ENCODE measurements at regions of chr15 and their contacts with region 1.

Region 1: DNA sequence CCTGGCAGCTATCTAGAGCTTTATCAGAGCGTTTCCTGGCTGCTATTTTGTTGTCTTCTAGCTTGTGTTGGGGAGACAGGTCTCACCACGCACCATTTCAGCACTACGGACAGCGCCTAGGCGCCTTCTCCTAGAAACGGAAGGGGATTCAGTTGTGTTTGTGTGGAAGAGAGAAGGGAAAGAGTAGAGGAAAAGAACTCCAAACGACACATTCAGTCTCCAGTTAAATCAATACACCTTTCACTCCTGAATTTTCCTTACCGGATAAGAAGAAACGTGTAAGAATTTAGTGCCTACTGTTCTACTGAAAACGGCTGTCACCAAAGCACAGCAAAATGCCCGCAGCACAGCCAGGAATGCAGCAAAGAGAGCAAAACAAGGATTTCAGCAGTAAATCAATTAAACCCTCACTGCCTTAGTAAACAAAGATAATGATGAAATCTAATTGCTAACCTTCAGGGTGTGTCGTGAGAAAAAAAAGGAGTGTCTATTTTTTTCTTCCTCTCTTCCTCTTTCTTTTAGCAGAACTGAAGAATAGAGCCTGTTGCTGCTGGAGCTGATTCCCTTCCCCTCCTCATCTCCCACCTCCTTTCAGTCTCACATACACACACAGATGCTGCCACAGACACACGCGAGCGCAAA is 412 bp upstream of the CTXN2 start:
- DNase-seq: peak in 4 of 5 donors; percentile 1 to 19 (median 4)
- H3K4me3 ChIP-seq: no peak overlapping the region
- H3K4me3 Mint-ChIP-seq: no peak overlapping the region
- H3K27ac ChIP-seq: no peak overlapping the region
- H3K27ac Mint-ChIP-seq: no peak overlapping the region
- H3K4me1 ChIP-seq: no peaks in the 10 kb centered on the region
- H3K4me1 Mint-ChIP-seq: peaks cover 0 to 2% (median 0%) of the 10 kb centered on the region in 4 donors
- H3K27me3 ChIP-seq: peaks cover 6% of the 10 kb centered on the region
- H3K27me3 Mint-ChIP-seq: peaks cover 16 to 22% of the 10 kb centered on the region in 2 donors

Region 2: DNA sequence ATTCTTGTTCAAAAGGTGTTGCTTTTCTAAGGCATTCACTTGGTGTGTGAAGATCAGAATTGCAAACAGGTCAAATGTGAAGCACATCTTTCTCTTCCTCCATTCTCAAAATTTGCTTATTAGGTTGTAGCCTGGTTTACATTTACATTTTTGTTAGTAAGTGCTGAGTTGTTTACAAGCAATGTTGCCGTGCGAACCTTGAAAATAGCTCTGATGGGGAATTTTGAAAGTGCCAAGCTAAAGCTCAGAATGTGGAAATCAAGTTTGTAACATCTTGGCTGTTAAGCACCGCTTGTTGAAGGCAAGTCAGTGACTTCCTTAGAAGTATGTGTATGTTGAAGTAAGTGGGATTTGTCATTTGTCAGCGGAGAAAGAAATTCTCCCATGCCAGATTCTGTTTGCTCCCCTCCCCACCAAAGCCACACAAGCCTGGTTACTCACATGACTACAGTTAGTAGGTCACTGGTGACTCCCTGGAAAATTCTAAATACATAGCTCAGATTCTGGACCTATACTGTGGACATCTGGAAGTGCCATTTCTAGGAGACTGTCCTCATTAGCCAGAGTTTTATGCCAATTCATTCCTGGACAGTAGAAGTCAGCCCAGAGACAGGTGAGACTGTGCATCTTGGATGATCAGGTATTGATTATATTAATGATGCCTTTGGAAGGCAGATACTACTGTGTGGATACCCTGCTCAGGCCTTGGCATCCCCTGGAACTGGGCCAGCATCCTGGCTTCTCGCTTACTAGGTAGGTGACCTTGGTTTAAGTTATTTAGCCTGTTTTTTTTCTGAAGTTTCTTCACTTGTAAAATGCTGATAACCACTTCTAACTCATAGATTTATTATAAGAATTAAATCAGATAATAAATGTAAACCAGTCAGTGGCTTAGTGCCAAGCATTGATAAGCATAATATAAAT is 864.4 kb before region 1 on chr15:
- CTCF ChIA-PET with region 1: no interaction called
- POLR2A ChIA-PET with region 1: no interaction called
- intact Hi-C with region 1: no loop called
- DNase-seq: no peak
- H3K4me3 ChIP-seq: no peak overlapping the region
- H3K4me3 Mint-ChIP-seq: no peak overlapping the region
- H3K27ac ChIP-seq: no peak overlapping the region
- H3K27ac Mint-ChIP-seq: no peak overlapping the region
- H3K4me1 ChIP-seq: no peaks in the 10 kb centered on the region
- H3K4me1 Mint-ChIP-seq: no peaks in the 10 kb centered on the region
- H3K27me3 ChIP-seq: no peaks in the 10 kb centered on the region
- H3K27me3 Mint-ChIP-seq: peaks cover 0 to 1% of the 10 kb centered on the region in 2 donors

Region 3: GRCh38 chr15:47466351-47466750 is 724.7 kb before region 1 on chr15:
- CTCF ChIA-PET with region 1: no interaction called
- POLR2A ChIA-PET with region 1: no interaction called
- intact Hi-C with region 1: no loop called
- DNase-seq: no peak
- H3K4me3 ChIP-seq: no peak overlapping the region
- H3K4me3 Mint-ChIP-seq: no peak overlapping the region
- H3K27ac ChIP-seq: no peak overlapping the region
- H3K27ac Mint-ChIP-seq: no peak overlapping the region
- H3K4me1 ChIP-seq: no peaks in the 10 kb centered on the region
- H3K4me1 Mint-ChIP-seq: no peaks in the 10 kb centered on the region
- H3K27me3 ChIP-seq: no peaks in the 10 kb centered on the region
- H3K27me3 Mint-ChIP-seq: no peaks in the 10 kb centered on the region

Region 4: GRCh38 chr15:48250640-48251076 is 59.6 kb after region 1 on chr15:
- CTCF ChIA-PET with region 1: no interaction called
- POLR2A ChIA-PET with region 1: no interaction called
- intact Hi-C with region 1: loop called (anchors 10 kb)
- DNase-seq: peak in 2 of 5 donors; percentile 0 to 5
- H3K4me3 ChIP-seq: no peak overlapping the region
- H3K4me3 Mint-ChIP-seq: no peak overlapping the region
- H3K27ac ChIP-seq: no peak overlapping the region
- H3K27ac Mint-ChIP-seq: no peak overlapping the region
- H3K4me1 ChIP-seq: no peaks in the 10 kb centered on the region
- H3K4me1 Mint-ChIP-seq: no peaks in the 10 kb centered on the region
- H3K27me3 ChIP-seq: no peaks in the 10 kb centered on the region
- H3K27me3 Mint-ChIP-seq: peaks cover 1 to 11% of the 10 kb centered on the region in 2 donors

Measured in CD4-positive, alpha-beta memory T cell (primary cell).